ENCODE measurements at regions of chr1 and their contacts with region 1.

Region 1: DNA sequence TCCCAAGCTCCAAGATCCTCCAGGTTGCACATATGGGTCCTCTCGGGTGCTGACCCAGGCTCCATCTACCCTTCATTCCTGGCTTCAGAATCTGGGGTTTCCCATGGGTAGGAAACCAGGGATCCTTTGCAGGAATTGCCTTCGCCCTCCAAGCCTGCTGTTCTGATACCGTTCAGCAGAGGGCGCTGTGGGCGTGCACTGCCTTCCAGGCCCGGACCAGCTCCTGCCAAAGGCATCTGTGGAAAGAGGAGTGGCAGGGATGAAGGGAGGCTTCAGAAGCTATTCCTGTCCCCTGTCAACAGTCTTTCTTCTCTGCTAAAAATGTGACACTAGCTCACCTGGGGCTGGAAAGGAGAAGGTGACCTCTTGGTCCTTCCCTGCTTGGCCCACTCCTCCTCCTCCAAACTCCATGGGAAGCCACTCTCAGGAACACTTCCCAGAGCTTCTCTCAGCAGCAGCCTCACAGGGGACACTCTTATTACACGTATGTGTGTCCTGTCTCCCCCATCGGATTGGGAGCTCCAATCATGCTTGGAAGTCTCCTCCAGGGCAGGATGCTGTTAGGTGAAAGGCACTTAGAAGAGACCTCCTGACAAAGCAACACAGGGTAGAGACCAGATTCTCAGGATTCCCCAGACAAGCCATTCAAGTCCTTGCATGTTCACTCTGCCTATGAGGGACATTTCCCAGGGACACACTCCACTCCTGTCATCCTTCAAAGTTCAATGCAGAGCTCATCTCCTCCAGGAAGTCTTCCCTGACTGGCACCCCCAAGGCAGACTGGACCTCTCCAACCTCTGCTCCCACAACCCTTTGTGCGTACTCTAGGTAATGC is 71.3 kb downstream of the VWA5B1 start:
- DNase-seq: peak; percentile 65
- H3K4me3 ChIP-seq: no peak overlapping the region
- H3K27ac ChIP-seq: no peak overlapping the region
- H3K4me1 ChIP-seq: peaks cover 48% of the 10 kb centered on the region
- CTCF ChIP-seq: peak; percentile 99

Region 2: GRCh38 chr1:20080441-20081352 is 281.3 kb before region 1 on chr1:
- CTCF ChIA-PET with region 1: no interaction called
- POLR2A ChIA-PET with region 1: no interaction called
- intact Hi-C with region 1: no loop called
- DNase-seq: peak; percentile 48
- H3K4me3 ChIP-seq: no peak overlapping the region
- H3K27ac ChIP-seq: no peak overlapping the region
- H3K4me1 ChIP-seq: peaks cover 37% of the 10 kb centered on the region
- CTCF ChIP-seq: no peak

Region 3: GRCh38 chr1:20212685-20213331 is 149.2 kb before region 1 on chr1:
- CTCF ChIA-PET with region 1: interaction called, 3 read pairs
- POLR2A ChIA-PET with region 1: interaction called, 3 read pairs
- intact Hi-C with region 1: loop called (anchors 1 kb)
- DNase-seq: peak; percentile 94
- H3K4me3 ChIP-seq: peak overlapping the region; percentile 45
- H3K27ac ChIP-seq: peak overlapping the region; percentile 69
- H3K4me1 ChIP-seq: peaks cover 39% of the 10 kb centered on the region
- CTCF ChIP-seq: peak; percentile 97

Region 4: DNA sequence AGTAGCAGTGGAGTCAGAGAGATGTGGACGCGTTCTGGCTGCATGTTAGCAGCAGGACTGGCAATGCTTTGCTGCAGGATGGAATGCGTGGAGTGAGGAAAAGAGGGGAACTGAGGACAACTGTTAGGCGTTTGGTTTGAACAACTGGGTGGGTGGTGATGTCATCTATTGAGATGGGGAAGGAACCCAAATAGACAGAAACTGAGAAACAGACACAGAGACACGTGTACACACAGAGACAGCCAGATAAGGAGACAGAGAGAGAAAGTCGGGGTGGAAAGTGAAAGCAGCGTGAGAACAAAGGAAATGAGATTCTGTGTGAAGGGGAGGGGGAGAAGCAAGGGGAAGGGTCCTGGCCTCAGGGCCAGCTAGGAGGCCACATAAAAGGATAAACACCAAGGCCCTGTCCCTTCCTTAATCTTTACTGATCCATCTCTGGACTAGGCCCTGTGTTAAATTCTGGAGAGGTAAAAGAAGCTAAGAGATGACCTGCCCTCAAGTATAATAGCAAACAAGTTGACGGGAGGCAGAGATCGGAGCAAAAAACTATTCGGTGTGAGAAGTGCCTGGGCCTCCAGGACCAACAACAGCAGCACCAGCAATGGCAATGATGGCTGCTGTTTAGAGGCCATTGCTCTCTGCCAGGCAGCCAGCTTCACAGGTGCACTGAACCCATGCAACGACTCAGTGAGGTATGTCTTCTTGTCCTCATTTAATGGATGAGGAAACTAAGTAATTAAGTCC is 39.8 kb before region 1 on chr1:
- CTCF ChIA-PET with region 1: no interaction called
- POLR2A ChIA-PET with region 1: no interaction called
- intact Hi-C with region 1: loop called (anchors 1 kb)
- DNase-seq: peak; percentile 78
- H3K4me3 ChIP-seq: peak overlapping the region; percentile 13
- H3K27ac ChIP-seq: peak overlapping the region; percentile 63
- H3K4me1 ChIP-seq: peaks cover 48% of the 10 kb centered on the region
- CTCF ChIP-seq: no peak

Region 5: GRCh38 chr1:20376880-20377494 is 15.0 kb after region 1 on chr1:
- CTCF ChIA-PET with region 1: interaction called, 7 read pairs
- POLR2A ChIA-PET with region 1: interaction called, 9 read pairs
- intact Hi-C with region 1: loop called (anchors 2 kb)
- DNase-seq: peak; percentile 81
- H3K4me3 ChIP-seq: no peak overlapping the region
- H3K27ac ChIP-seq: peak overlapping the region; percentile 5
- H3K4me1 ChIP-seq: peaks cover 60% of the 10 kb centered on the region
- CTCF ChIP-seq: peak; percentile 91

Region 6: GRCh38 chr1:20405893-20406604 is 44.0 kb after region 1 on chr1:
- CTCF ChIA-PET with region 1: interaction called, 4 read pairs
- POLR2A ChIA-PET with region 1: interaction called, 3 read pairs
- intact Hi-C with region 1: loop called (anchors 2 kb)
- DNase-seq: peak; percentile 95
- H3K4me3 ChIP-seq: peak overlapping the region; percentile 67
- H3K27ac ChIP-seq: peak overlapping the region; percentile 99
- H3K4me1 ChIP-seq: peaks cover 87% of the 10 kb centered on the region
- CTCF ChIP-seq: no peak

Region 7: DNA sequence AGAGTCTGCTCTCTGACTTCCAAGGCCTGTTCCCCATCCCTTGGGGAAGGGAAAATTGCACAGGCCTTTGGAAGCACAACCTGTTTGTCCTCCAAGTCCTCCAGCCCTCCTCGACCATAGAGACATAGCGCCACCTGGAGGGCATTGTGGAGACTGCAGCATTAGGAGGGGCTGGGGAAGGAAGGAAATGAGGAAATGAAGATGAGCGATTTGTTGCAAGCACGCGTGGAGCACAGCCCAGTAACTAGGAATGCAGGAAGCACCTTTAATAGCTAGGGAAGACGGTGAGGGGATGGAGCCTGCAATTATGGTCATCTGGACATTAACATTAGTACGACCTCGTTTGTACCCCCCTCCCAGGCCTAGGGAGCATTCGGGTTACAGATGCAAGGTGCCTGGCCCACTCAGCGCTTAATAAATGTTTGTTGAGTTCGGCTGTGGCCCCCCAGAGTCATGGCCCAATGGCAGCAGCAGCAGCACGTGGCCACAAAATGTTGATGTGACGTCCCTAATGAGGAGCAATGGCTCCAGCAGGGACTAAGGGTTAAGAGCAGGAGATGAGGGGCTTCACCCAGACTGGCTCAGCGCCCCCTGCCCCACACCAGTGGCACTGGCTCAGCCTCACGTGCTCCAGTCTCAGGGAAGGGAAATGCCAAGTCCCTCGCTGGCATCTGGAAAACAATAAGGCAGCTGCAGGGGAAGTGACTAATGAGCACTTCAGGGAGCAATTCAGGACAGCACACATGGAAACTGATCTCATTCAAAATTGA is 132.0 kb after region 1 on chr1:
- CTCF ChIA-PET with region 1: interaction called, 7 read pairs
- POLR2A ChIA-PET with region 1: interaction called, 3 read pairs
- intact Hi-C with region 1: loop called (anchors 1 kb)
- DNase-seq: peak; percentile 83
- H3K4me3 ChIP-seq: no peak overlapping the region
- H3K27ac ChIP-seq: no peak overlapping the region
- H3K4me1 ChIP-seq: peaks cover 21% of the 10 kb centered on the region
- CTCF ChIP-seq: peak; percentile 98

Measured in OCI-LY7 (cell line).